ENCODE measurements at regions of chr22 and their contacts with region 1.

Region 1: GRCh38 chr22:36409911-36410756 is 22.4 kb upstream of the MYH9 start:
- DNase-seq: peak; percentile 32 to 89 (median 66)
- ATAC-seq: peak; percentile 81
- H3K4me3 ChIP-seq: peak overlapping the region; percentile 34
- H3K4me3 Mint-ChIP-seq: peak overlapping the region; percentile 40
- H3K27ac ChIP-seq: peak overlapping the region; percentile 44 to 63
- H3K27ac Mint-ChIP-seq: peak overlapping the region; percentile 74
- H3K4me1 ChIP-seq: peaks cover 66% of the 10 kb centered on the region
- H3K4me1 Mint-ChIP-seq: peaks cover 63% of the 10 kb centered on the region
- H3K27me3 ChIP-seq: no peaks in the 10 kb centered on the region
- H3K27me3 Mint-ChIP-seq: no peaks in the 10 kb centered on the region
- CTCF ChIP-seq: no peak

Region 2: GRCh38 chr22:36439481-36440271 is 29.5 kb after region 1 on chr22:
- CTCF ChIA-PET with region 1: interaction called, 12 read pairs
- POLR2A ChIA-PET with region 1: interaction called, 7 read pairs
- intact Hi-C with region 1: no loop called
- DNase-seq: peak in 2 of 14 experiments; percentile 26 to 35
- ATAC-seq: no peak
- H3K4me3 ChIP-seq: no peak overlapping the region
- H3K4me3 Mint-ChIP-seq: no peak overlapping the region
- H3K27ac ChIP-seq: no peak overlapping the region
- H3K27ac Mint-ChIP-seq: no peak overlapping the region
- H3K4me1 ChIP-seq: peaks cover 36% of the 10 kb centered on the region
- H3K4me1 Mint-ChIP-seq: peaks cover 39% of the 10 kb centered on the region
- H3K27me3 ChIP-seq: no peaks in the 10 kb centered on the region
- H3K27me3 Mint-ChIP-seq: no peaks in the 10 kb centered on the region
- CTCF ChIP-seq: no peak

Region 3: DNA sequence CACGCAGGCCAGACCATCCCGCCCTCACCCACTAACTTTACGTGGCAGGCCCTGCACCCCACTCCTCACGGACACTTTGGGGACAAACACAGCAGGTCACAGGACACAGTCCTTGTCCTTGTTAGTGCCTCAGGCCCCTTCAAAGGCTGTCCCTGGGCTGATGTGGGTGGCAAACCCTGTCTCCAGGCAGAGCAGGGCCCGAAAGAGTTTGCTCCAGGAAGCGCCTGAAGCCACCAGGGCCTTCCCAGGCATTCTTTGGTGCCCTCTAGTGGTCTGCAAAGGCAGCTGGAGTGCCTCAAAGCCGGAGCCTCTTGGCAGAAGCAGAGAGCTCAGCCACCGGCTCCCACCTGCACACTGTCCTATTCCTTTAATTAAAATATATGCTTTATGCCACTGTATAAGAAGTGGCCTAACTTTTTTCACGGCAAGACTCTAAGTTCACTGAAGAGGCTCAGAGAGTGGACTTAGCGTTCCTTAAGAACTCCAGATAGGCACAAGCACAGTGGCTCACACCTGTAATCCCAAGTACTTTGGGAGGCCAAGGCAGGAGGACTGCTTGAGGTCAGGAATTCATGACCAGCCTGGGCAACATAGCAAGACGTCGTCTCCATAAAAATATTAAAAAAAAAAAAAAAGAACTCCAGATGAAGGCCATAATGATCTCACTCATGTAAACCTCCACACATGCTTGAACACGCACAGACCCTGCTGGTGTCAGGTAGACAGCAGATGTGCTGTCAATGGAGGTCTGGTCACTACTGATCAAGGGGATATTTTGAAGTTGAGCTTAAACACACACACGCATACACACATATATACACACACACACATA is 60.2 kb after region 1 on chr22:
- CTCF ChIA-PET with region 1: interaction called, 14 read pairs
- POLR2A ChIA-PET with region 1: interaction called, 3 read pairs
- intact Hi-C with region 1: loop called (anchors 1 kb)
- DNase-seq: peak; percentile 71 to 92 (median 78)
- ATAC-seq: peak; percentile 98
- H3K4me3 ChIP-seq: no peak overlapping the region
- H3K4me3 Mint-ChIP-seq: no peak overlapping the region
- H3K27ac ChIP-seq: no peak overlapping the region
- H3K27ac Mint-ChIP-seq: peak overlapping the region; percentile 70
- H3K4me1 ChIP-seq: peaks cover 27% of the 10 kb centered on the region
- H3K4me1 Mint-ChIP-seq: peaks cover 26% of the 10 kb centered on the region
- H3K27me3 ChIP-seq: no peaks in the 10 kb centered on the region
- H3K27me3 Mint-ChIP-seq: no peaks in the 10 kb centered on the region
- CTCF ChIP-seq: peak; percentile 89

Region 4: GRCh38 chr22:36481393-36482168 is 71.4 kb after region 1 on chr22 and contains the start of gene TXN2:
- CTCF ChIA-PET with region 1: no interaction called
- POLR2A ChIA-PET with region 1: no interaction called
- intact Hi-C with region 1: no loop called
- DNase-seq: peak; percentile 92 to 98 (median 96)
- ATAC-seq: peak; percentile 87
- H3K4me3 ChIP-seq: peak within 1 kb of the TSS; percentile 67
- H3K4me3 Mint-ChIP-seq: peak within 1 kb of the TSS; percentile 95
- H3K27ac ChIP-seq: peak within 1 kb of the TSS; percentile 94 to 99
- H3K27ac Mint-ChIP-seq: peak within 1 kb of the TSS; percentile 92
- H3K4me1 ChIP-seq: peaks cover 22% of the 10 kb centered on the region
- H3K4me1 Mint-ChIP-seq: peaks cover 22% of the 10 kb centered on the region
- H3K27me3 ChIP-seq: no peaks in the 10 kb centered on the region
- H3K27me3 Mint-ChIP-seq: no peaks in the 10 kb centered on the region
- CTCF ChIP-seq: no peak
- total RNA-seq, gene TXN2: 26.4 to 26.5 TPM

Region 5: GRCh38 chr22:36497910-36498665 is 88.0 kb after region 1 on chr22:
- CTCF ChIA-PET with region 1: no interaction called
- POLR2A ChIA-PET with region 1: no interaction called
- intact Hi-C with region 1: no loop called
- DNase-seq: no peak
- ATAC-seq: no peak
- H3K4me3 ChIP-seq: no peak overlapping the region
- H3K4me3 Mint-ChIP-seq: no peak overlapping the region
- H3K27ac ChIP-seq: no peak overlapping the region
- H3K27ac Mint-ChIP-seq: no peak overlapping the region
- H3K4me1 ChIP-seq: peaks cover 8% of the 10 kb centered on the region
- H3K4me1 Mint-ChIP-seq: peaks cover 5% of the 10 kb centered on the region
- H3K27me3 ChIP-seq: no peaks in the 10 kb centered on the region
- H3K27me3 Mint-ChIP-seq: no peaks in the 10 kb centered on the region
- CTCF ChIP-seq: no peak

Region 6: GRCh38 chr22:36528795-36529751 is 118.9 kb after region 1 on chr22 and contains the start of gene EIF3D:
- CTCF ChIA-PET with region 1: no interaction called
- POLR2A ChIA-PET with region 1: no interaction called
- intact Hi-C with region 1: no loop called
- DNase-seq: peak; percentile 95 to 100 (median 98)
- ATAC-seq: peak; percentile 91
- H3K4me3 ChIP-seq: peak within 1 kb of the TSS; percentile 95
- H3K4me3 Mint-ChIP-seq: peak within 1 kb of the TSS; percentile 92
- H3K27ac ChIP-seq: peak within 1 kb of the TSS; percentile 87 to 94
- H3K27ac Mint-ChIP-seq: peak within 1 kb of the TSS; percentile 93
- H3K4me1 ChIP-seq: peaks cover 19% of the 10 kb centered on the region
- H3K4me1 Mint-ChIP-seq: peaks cover 26% of the 10 kb centered on the region
- H3K27me3 ChIP-seq: no peaks in the 10 kb centered on the region
- H3K27me3 Mint-ChIP-seq: no peaks in the 10 kb centered on the region
- CTCF ChIP-seq: no peak
- total RNA-seq, gene EIF3D: 285 to 286 TPM